CD4-positive, alpha-beta memory T cell (primary cell): ENCODE measurements at regions of chr6 and their contacts with region 1.

Region 1: GRCh38 chr6:3118353-3119039 is at the start of gene BPHL:
- DNase-seq: peak; percentile 98 to 100 (median 99)
- H3K4me3 ChIP-seq: peak within 1 kb of the TSS; percentile 76 to 94
- H3K4me3 Mint-ChIP-seq: peak within 1 kb of the TSS; percentile 75 to 96 (median 91)
- H3K27ac ChIP-seq: peak within 1 kb of the TSS; percentile 87
- H3K27ac Mint-ChIP-seq: peak within 1 kb of the TSS; percentile 93 to 97 (median 96)
- H3K4me1 ChIP-seq: peaks cover 14% of the 10 kb centered on the region
- H3K4me1 Mint-ChIP-seq: peaks cover 7 to 20% (median 14%) of the 10 kb centered on the region in 4 donors
- H3K27me3 ChIP-seq: no peaks in the 10 kb centered on the region
- H3K27me3 Mint-ChIP-seq: no peaks in the 10 kb centered on the region
- total RNA-seq, gene BPHL: 11.9 to 13.7 TPM

Region 2: DNA sequence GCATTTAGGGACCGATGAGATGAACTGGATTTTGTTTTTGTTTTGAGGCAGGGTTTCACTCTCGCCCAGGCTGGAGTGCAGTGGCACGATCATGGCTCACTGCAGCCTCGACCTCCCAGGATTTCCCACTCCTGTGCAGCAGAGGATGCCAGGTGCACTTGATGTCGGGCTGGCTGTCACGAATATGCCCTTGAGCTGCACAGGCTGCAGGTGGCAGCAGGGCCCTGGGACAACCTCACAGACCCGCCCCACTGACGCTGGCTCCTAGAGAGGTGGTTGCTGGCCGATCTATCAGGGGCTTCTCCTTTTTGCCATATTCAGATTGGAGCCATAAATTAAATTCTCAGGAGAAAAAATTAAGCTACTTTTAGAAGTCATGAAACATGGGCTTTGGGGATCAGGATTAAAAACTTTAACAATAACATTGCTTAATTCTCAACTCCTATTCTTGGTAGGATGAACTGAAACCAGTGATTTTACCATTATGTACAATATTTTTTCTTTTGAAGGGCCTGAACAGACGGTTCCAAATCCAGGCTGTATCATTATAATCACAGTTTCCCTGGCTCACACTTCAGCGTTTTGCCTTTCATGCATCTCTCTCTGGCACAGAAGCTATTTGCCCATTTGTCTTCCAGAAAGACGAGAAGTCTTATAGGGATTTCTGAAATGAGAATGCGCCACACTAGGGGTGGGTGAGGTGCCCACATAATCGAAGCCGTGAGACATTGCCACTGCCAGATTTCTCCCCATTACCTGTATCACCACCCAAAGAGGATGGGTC is 86.4 kb before region 1 on chr6:
- CTCF ChIA-PET with region 1: no interaction called
- POLR2A ChIA-PET with region 1: no interaction called
- intact Hi-C with region 1: no loop called
- DNase-seq: no peak
- H3K4me3 ChIP-seq: no peak overlapping the region
- H3K4me3 Mint-ChIP-seq: no peak overlapping the region
- H3K27ac ChIP-seq: no peak overlapping the region
- H3K27ac Mint-ChIP-seq: peak overlapping the region in 1 of 7 donors; percentile 41
- H3K4me1 ChIP-seq: peaks cover 12% of the 10 kb centered on the region
- H3K4me1 Mint-ChIP-seq: peaks cover 4 to 13% (median 5%) of the 10 kb centered on the region in 4 donors
- H3K27me3 ChIP-seq: no peaks in the 10 kb centered on the region
- H3K27me3 Mint-ChIP-seq: peaks cover 0 to 2% of the 10 kb centered on the region in 2 donors

Region 3: GRCh38 chr6:3133515-3133914 is 15.0 kb after region 1 on chr6:
- CTCF ChIA-PET with region 1: no interaction called
- POLR2A ChIA-PET with region 1: no interaction called
- intact Hi-C with region 1: no loop called
- DNase-seq: no peak
- H3K4me3 ChIP-seq: no peak overlapping the region
- H3K4me3 Mint-ChIP-seq: no peak overlapping the region
- H3K27ac ChIP-seq: no peak overlapping the region
- H3K27ac Mint-ChIP-seq: no peak overlapping the region
- H3K4me1 ChIP-seq: no peaks in the 10 kb centered on the region
- H3K4me1 Mint-ChIP-seq: no peaks in the 10 kb centered on the region
- H3K27me3 ChIP-seq: no peaks in the 10 kb centered on the region
- H3K27me3 Mint-ChIP-seq: no peaks in the 10 kb centered on the region

Region 4: DNA sequence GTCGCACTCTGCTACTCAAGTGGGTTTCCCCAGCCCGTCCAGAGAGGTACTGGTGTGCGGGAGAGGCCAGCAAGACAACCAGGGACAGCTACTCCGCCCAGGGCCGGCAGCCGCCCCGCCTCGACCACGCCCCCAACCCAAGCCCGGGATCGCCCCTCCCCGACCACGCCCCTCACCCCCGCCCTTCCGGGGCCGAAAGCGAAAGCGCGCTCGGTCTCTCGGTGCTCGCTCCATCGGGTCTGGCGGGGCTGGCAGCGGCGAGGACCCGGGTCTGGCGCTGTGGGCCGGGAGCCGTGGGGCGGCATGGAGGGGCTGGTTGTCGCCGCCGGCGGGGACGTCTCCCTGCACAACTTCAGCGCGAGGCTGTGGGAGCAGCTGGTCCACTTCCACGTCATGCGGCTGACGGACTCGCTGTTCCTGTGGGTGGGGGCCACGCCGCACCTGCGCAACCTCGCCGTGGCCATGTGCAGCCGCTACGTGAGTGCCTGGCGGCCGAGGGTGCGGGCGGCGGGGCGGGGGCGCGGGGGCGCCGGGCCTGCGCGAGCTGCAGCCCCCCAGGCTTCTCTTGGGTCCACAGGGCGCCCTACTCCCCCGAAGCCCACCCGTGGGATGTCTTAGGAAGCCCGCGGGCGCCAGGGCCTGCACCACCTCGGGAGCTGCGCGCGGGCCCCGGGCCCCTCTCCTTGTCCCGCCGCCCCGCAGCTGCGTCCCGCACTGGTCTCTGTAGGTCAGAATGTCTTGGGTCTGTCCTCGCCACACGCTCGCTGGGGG is 140.4 kb after region 1 on chr6 and contains the start of gene PSMG4:
- CTCF ChIA-PET with region 1: interaction called, 3 read pairs
- POLR2A ChIA-PET with region 1: interaction called, 5 read pairs
- intact Hi-C with region 1: loop called (anchors 2 kb)
- DNase-seq: peak; percentile 87 to 92 (median 88)
- H3K4me3 ChIP-seq: peak within 1 kb of the TSS; percentile 44 to 67
- H3K4me3 Mint-ChIP-seq: peak within 1 kb of the TSS; percentile 93 to 99 (median 96)
- H3K27ac ChIP-seq: peak within 1 kb of the TSS; percentile 70
- H3K27ac Mint-ChIP-seq: peak within 1 kb of the TSS; percentile 92 to 99 (median 95)
- H3K4me1 ChIP-seq: peaks cover 45% of the 10 kb centered on the region
- H3K4me1 Mint-ChIP-seq: peaks cover 21 to 49% (median 37%) of the 10 kb centered on the region in 4 donors
- H3K27me3 ChIP-seq: no peaks in the 10 kb centered on the region
- H3K27me3 Mint-ChIP-seq: no peaks in the 10 kb centered on the region
- total RNA-seq, gene PSMG4: 41.0 to 41.6 TPM